Caco-2 (cell line): ENCODE measurements at regions of chr11 and their contacts with region 1.

Region 1: GRCh38 chr11:22539821-22540256 is 85.8 kb downstream of the FANCF start:
- DNase-seq: peak in 1 of 2 experiments; percentile 31
- H3K4me3 ChIP-seq: no peak overlapping the region
- H3K4me3 Mint-ChIP-seq: no peak overlapping the region
- H3K27ac Mint-ChIP-seq: no peak overlapping the region
- H3K4me1 ChIP-seq: no peaks in the 10 kb centered on the region
- H3K4me1 Mint-ChIP-seq: no peaks in the 10 kb centered on the region
- H3K27me3 ChIP-seq: no peaks in the 10 kb centered on the region
- H3K27me3 Mint-ChIP-seq: peaks cover 8% of the 10 kb centered on the region
- CTCF ChIP-seq: peak; percentile 39 to 56

Region 2: DNA sequence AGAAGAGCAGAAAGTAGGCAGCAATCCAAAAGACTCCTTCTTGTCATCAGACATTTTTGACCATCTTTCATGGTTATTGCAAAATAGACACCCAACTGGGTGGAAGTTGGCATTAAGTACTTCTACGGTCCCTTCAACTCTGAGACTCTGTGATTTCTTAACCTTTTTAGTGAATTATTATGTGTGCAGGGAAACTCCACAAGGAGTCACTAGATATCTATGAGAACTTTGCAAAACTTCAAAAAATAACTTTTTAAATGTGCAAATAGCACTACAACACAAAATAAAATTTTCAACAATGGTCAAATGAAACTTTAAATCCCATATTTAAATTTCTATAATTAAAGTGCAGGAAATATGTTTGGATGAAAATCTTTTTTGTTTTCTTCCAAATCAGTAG is 112.9 kb before region 1 on chr11:
- CTCF ChIA-PET with region 1: no interaction called
- POLR2A ChIA-PET with region 1: no interaction called
- intact Hi-C with region 1: loop called (anchors 1 kb)
- DNase-seq: no peak
- H3K4me3 ChIP-seq: no peak overlapping the region
- H3K4me3 Mint-ChIP-seq: no peak overlapping the region
- H3K27ac Mint-ChIP-seq: no peak overlapping the region
- H3K4me1 ChIP-seq: no peaks in the 10 kb centered on the region
- H3K4me1 Mint-ChIP-seq: no peaks in the 10 kb centered on the region
- H3K27me3 ChIP-seq: no peaks in the 10 kb centered on the region
- H3K27me3 Mint-ChIP-seq: peaks cover 8% of the 10 kb centered on the region
- CTCF ChIP-seq: peak in 1 of 2 experiments; percentile 6

Region 3: GRCh38 chr11:22657101-22657694 is 117.4 kb after region 1 on chr11:
- CTCF ChIA-PET with region 1: no interaction called
- POLR2A ChIA-PET with region 1: no interaction called
- intact Hi-C with region 1: no loop called
- DNase-seq: no peak
- H3K4me3 ChIP-seq: no peak overlapping the region
- H3K4me3 Mint-ChIP-seq: no peak overlapping the region
- H3K27ac Mint-ChIP-seq: no peak overlapping the region
- H3K4me1 ChIP-seq: no peaks in the 10 kb centered on the region
- H3K4me1 Mint-ChIP-seq: no peaks in the 10 kb centered on the region
- H3K27me3 ChIP-seq: no peaks in the 10 kb centered on the region
- H3K27me3 Mint-ChIP-seq: no peaks in the 10 kb centered on the region
- CTCF ChIP-seq: no peak